Posterior cingulate gyrus (tissue), 11 donors: ENCODE measurements at regions of chr6 and their contacts with region 1.

Region 1: GRCh38 chr6:106913676-106914280 is 60.8 kb downstream of the CD24 start:
- DNase-seq: no peak

Region 2: DNA sequence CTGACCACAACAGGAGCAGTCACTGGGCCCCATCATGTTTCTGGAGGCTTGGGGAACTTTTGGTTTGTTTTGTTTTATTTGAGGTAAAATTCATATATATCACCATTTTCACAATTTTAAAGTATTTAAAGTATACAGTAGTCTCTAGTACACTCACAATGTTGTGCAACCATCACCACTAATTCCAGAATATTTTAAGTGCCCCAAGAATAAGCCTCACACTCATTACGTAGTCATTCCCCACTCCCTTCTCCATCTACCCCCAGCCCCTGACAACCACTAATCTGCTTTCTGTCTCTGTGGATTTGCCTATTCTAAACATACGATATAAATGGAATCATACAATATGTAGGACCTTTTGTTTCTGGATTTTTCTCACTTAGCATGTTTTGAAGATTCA is 313.4 kb before region 1 on chr6:
- intact Hi-C with region 1: no loop called
- DNase-seq: no peak

Region 3: GRCh38 chr6:106783631-106784566 is 129.9 kb before region 1 on chr6:
- intact Hi-C with region 1: loop called (anchors 10 kb)
- DNase-seq: no peak

Region 4: GRCh38 chr6:107154131-107154800 is 240.5 kb after region 1 on chr6:
- intact Hi-C with region 1: no loop called
- DNase-seq: peak in 1 of 10 donors; percentile 77